A549 (cell line): ENCODE measurements at regions of chr9 and their contacts with region 1.

Region 1: GRCh38 chr9:129796029-129796910 is 6.7 kb upstream of the TOR1B start:
- DNase-seq: no peak
- ATAC-seq: peak in 1 of 2 experiments; percentile 16; a peak in 2 of 6 replicates
- H3K4me3 ChIP-seq: no peak overlapping the region
- H3K27ac ChIP-seq: no peak overlapping the region
- H3K4me1 ChIP-seq: peaks cover 3% of the 10 kb centered on the region; the same call in 1 of the 3 replicates
- CTCF ChIP-seq: no peak
- EP300 ChIP-seq: no peak
- POLR2A ChIP-seq: no peak
- RAD21 ChIP-seq: no peak

Region 2: GRCh38 chr9:129702589-129703520 is 93.4 kb before region 1 on chr9:
- CTCF ChIA-PET with region 1: interaction called, 10 read pairs
- POLR2A ChIA-PET with region 1: no interaction called
- DNase-seq: peak; percentile 57 to 61
- ATAC-seq: peak in 1 of 2 experiments; percentile 49; a peak in 3 of 6 replicates
- H3K4me3 ChIP-seq: no peak overlapping the region
- H3K27ac ChIP-seq: 0 out of 6 replicates have a peak overlapping the region, but pooled peaks of 1 of the 2 experiments have one; percentile 19
- H3K4me1 ChIP-seq: peaks cover 8% of the 10 kb centered on the region
- CTCF ChIP-seq: no peak
- EP300 ChIP-seq: no peak
- POLR2A ChIP-seq: no peak
- RAD21 ChIP-seq: no peak

Region 3: GRCh38 chr9:129863059-129863690 is 66.9 kb after region 1 on chr9:
- CTCF ChIA-PET with region 1: no interaction called
- POLR2A ChIA-PET with region 1: no interaction called
- DNase-seq: no peak
- ATAC-seq: no peak
- H3K4me3 ChIP-seq: no peak overlapping the region
- H3K27ac ChIP-seq: no peak overlapping the region
- H3K4me1 ChIP-seq: no peaks in the 10 kb centered on the region
- CTCF ChIP-seq: no peak
- EP300 ChIP-seq: no peak
- POLR2A ChIP-seq: no peak
- RAD21 ChIP-seq: no peak